ENCODE measurements at regions of chr17 and their contacts with region 1.

Region 1: DNA sequence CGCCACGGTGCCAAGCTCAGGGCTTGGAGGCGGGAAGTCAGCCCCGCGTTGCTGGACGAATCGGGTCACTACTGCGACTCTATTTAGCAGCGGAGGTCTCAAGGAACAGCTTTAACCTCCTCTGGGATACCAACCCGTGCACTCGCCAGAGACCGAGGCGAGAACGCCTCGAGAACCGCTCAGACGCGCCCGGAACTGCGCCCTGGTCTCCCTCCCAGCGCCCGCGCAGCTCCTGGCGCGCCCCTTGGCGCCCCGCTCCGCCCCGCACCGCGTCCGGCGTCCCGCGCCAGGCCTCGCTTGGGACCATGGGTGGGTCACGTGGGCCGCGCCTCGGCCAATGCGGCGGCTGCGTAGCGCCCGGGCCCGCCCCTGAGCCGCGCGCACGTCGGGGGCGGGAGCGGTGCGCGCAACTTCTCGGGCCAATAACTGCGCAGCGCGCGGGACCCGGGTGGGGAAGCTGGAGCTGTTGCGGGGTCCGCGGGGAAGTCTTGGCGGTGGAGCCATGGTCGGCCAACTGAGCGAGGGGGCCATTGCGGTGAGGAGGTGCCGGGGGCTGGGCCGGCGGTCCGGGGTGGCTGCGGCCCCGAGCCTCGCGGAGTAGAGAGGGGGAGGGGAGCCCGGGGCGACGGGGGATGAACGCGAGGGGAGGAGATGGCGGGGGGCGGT is at the starts of genes RPA1 and SMYD4:
- H3K4me3 ChIP-seq: peak within 1 kb of the TSS; percentile 88
- H3K27ac ChIP-seq: peak within 1 kb of the TSS; percentile 59; the same call in 1 of the 2 replicates
- H3K4me1 ChIP-seq: 0 out of 2 replicates have a peak, but pooled peaks cover 3% of the 10 kb centered on the region
- CTCF ChIP-seq: no peak

Region 2: DNA sequence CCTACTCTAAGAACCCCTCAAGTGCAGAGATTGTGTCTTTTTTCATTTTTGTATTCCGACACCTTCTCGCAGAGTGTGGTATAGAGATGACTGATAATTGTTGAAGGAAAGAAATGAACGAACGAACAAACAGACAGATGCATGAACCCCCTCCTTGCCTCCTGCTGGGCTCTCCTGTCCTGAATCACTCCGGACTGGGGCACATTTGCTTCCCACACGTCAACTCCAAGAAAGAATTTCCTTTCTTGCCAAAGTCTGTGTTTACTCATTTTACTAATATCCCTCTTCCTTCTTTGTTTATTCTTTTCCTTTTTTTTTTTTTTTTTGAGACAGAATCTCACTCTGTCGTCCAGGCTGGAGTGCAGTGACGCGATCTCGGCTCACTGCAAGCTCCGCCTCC is 596.9 kb before region 1 on chr17:
- CTCF ChIA-PET with region 1: no interaction called
- POLR2A ChIA-PET with region 1: no interaction called
- H3K4me3 ChIP-seq: no peak overlapping the region
- H3K27ac ChIP-seq: no peak overlapping the region
- H3K4me1 ChIP-seq: peaks cover 6% of the 10 kb centered on the region
- CTCF ChIP-seq: no peak

Region 3: DNA sequence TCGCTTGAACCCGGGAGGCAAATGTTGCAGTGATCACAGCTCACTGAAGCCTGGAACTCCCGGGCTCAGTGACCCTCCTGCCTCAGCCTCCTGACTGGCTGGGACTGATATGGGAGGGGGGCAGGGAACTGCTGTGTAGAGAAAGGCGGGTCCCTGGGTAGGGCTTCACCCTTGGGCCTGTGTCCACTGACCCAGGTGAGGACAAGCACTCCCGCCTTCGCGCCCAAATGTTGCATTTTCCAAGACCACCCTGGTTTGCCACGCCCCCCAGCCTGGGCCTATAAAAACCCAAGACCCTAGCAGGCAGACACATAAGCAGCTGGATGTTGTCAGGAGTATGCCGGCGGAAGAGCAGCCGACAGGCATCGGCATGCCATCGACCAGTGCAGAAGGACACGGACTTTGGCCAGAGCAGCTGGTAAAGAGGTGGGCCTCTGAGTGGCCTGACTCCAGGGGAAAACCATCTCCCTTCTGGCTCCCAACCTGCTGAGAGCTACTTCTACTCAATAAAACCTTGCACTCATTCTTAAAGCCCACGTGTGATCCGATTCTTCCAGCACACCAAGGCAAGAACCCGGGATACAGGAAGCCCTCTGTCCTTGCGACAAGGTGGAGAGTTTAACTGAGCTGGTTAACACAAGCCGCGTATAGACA is 19.1 kb before region 1 on chr17:
- CTCF ChIA-PET with region 1: no interaction called
- POLR2A ChIA-PET with region 1: interaction called, 10 read pairs
- H3K4me3 ChIP-seq: no peak overlapping the region
- H3K27ac ChIP-seq: no peak overlapping the region
- H3K4me1 ChIP-seq: no peaks in the 10 kb centered on the region
- CTCF ChIP-seq: no peak